ENCODE measurements at regions of chr1 and their contacts with region 1.

Region 1: DNA sequence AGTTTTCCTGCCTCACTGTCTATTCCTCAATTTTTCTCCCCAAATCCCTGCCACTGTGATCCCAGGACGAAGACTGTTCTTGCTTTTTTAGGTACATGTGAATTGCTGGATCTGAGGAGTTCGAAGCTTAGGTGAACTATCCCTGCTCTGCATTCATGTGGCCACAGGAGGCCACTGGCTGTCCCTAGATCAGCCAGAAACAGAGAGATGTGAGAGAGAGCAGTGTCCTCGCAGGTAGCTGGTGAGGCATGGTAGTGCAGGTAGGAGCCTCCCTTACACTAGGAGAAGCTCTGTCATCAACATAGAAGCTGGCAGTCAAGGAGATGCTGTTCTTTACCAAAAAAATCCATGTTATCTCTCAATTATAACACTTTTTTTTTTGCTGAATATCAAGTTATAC is 71.5 kb downstream of the USP24 start:
- DNase-seq: peak; percentile 47
- ATAC-seq: peak; percentile 100
- H3K4me3 Mint-ChIP-seq: no peak overlapping the region
- H3K27ac Mint-ChIP-seq: 0 out of 2 replicates have a peak overlapping the region, but pooled peaks have one; percentile 11
- H3K4me1 Mint-ChIP-seq: no peaks in the 10 kb centered on the region
- H3K27me3 Mint-ChIP-seq: no peaks in the 10 kb centered on the region
- CTCF ChIP-seq: no peak

Region 2: DNA sequence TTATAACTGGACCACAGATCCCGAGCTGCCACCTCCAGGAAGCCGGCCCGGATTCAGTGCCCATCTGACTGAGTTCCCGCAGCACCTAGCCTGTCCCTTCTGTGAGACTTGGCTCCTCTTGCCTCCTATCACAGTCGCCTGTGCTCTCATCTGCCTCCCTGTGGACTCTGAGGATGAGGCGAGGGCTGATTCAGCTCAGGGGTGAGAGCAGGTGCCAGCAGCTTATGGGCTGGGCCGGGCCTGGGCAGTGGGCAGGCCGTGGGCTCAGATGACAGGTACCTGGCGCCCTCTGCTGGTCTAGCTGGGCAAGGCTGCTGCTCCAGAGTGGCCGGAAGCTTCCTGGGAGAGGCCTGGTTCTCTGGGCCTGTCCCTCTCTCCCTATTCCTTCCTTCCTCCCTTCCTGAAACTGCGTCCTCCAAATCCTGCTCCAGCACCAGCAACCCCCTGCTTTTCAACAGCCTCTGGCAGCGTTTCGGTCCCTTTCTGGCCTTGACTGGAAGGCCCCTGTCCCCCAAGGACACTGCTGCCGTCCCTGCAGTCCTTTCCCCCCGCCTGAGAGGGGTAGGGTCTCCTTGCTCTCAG is 121.6 kb before region 1 on chr1:
- CTCF ChIA-PET with region 1: no interaction called
- POLR2A ChIA-PET with region 1: no interaction called
- DNase-seq: peak; percentile 96
- ATAC-seq: peak; percentile 100
- H3K4me3 Mint-ChIP-seq: no peak overlapping the region
- H3K27ac Mint-ChIP-seq: peak overlapping the region; percentile 82
- H3K4me1 Mint-ChIP-seq: peaks cover 44% of the 10 kb centered on the region
- H3K27me3 Mint-ChIP-seq: peaks cover 10% of the 10 kb centered on the region; the same call in 1 of the 2 replicates
- CTCF ChIP-seq: peak; percentile 88

Region 3: DNA sequence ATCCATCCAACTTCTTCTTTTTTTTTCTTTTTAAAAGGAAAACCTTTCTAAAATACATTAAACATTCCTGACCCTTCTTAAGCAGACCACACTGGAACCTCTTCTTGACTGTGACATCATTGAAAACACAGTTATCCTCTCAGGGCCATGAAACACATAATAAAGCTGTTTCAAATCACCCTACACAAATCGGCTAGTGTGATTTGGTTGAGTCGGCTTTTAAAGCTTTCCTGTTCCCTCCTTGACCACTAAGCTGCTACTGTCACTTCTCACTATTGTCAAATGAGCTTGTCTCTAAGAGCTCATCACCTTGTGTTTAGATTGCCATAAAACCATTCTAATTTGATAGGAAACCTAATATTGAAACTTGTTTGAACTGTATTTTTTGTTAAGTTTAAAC is 65.6 kb after region 1 on chr1:
- CTCF ChIA-PET with region 1: interaction called, 12 read pairs
- POLR2A ChIA-PET with region 1: no interaction called
- DNase-seq: no peak
- ATAC-seq: 0 out of 2 replicates have a peak, but pooled peaks have one; percentile 14
- H3K4me3 Mint-ChIP-seq: no peak overlapping the region
- H3K27ac Mint-ChIP-seq: no peak overlapping the region
- H3K4me1 Mint-ChIP-seq: peaks cover 70% of the 10 kb centered on the region
- H3K27me3 Mint-ChIP-seq: no peaks in the 10 kb centered on the region; the same call in 1 of the 2 replicates
- CTCF ChIP-seq: no peak

Region 4: DNA sequence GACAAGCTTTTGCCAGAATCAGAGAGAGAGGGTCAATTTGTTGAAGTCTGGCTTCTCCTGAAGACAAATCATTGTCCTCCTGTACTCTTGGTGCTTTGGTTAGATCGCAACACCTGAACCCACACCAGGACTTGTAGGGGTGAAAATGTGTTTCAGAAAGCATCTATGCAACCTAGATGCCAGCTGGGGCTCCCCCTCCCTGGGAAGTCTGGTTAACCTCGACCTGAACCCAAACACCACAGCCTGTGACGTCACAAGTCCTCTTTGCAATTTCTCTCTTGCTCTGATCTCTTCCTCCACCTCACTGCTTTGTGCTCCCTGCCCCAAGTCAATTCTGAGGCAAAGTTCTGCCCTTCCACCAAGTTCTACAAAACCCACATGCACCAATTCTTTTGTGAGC is 114.3 kb after region 1 on chr1:
- CTCF ChIA-PET with region 1: interaction called, 10 read pairs
- POLR2A ChIA-PET with region 1: no interaction called
- DNase-seq: no peak
- ATAC-seq: no peak
- H3K4me3 Mint-ChIP-seq: no peak overlapping the region
- H3K27ac Mint-ChIP-seq: no peak overlapping the region
- H3K4me1 Mint-ChIP-seq: no peaks in the 10 kb centered on the region
- H3K27me3 Mint-ChIP-seq: no peaks in the 10 kb centered on the region
- CTCF ChIP-seq: no peak

Region 5: DNA sequence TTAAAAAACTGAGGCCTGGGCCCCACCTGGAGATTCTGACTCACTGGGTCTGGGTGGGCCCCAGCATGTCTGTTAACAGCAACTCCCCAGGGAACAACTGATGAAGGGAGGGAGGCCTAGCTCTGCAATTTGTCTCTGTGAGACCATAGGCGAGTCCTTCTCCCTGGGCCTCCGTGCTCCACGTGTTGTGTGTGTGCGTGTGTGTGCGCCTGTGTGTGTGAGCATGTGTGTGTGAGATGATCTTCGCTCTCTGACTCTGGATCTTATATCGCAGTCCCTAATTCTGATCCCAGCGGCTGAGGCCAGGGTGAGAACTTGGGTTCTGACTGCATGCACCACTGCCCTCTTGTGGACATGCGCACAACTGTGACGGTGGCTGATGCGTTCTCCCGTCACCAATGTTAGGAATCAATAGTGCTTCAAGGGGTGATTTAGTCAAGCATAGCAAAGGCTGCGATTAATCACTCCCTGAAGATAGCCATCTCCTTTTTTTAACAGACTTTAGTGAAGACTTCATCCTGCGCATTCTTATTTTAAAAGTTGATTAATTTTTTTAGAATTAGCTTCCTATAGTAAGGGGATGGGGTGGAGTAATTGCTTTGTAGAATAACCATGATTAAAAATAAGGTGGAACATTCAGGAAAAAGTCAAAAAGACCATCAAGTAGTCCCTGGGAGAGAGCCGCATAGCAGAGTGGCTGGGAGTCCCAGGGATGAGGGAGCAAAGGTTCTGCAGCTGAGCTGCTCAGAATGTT is 133.9 kb after region 1 on chr1:
- CTCF ChIA-PET with region 1: interaction called, 25 read pairs
- POLR2A ChIA-PET with region 1: no interaction called
- DNase-seq: peak; percentile 89
- ATAC-seq: peak; percentile 96
- H3K4me3 Mint-ChIP-seq: no peak overlapping the region
- H3K27ac Mint-ChIP-seq: no peak overlapping the region
- H3K4me1 Mint-ChIP-seq: peaks cover 19% of the 10 kb centered on the region
- H3K27me3 Mint-ChIP-seq: no peaks in the 10 kb centered on the region
- CTCF ChIP-seq: peak; percentile 64; the same call in 1 of the 2 replicates